ENCODE measurements at regions of chr22 and their contacts with region 1.

Region 1: GRCh38 chr22:33302049-33302545 is 243.9 kb upstream of the SYN3 start:
- DNase-seq: peak; percentile 85
- ATAC-seq: peak; percentile 87 to 91

Region 2: DNA sequence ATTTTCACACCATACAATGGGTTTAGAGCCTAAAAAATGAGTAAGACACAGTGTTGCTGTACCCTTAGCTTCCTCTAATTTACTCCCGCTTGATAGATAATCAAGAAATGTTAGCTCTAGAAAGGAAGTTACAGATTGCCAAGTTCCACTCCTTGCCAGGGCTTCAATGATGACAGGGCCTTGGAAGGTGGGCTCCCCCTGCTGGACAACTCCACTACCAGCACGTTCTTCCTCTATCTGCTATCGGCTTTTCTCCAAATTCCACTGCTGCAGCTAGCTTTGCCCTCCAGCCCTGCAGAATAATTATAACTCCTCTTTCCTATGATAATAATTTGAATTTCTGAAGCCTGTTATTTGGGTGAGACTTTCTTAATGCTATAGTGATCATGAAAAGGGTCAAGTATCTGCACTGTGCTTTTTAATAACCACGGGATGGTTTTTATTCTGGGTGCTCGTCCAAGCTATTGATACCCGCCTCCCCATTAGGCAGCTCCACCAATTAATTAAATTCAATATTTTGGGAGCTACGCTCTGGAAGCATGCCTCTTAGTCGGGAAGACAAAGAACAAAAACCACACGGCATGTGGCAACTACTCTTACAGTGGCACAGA is 252.9 kb before region 1 on chr22:
- intact Hi-C with region 1: no loop called
- DNase-seq: peak; percentile 81
- ATAC-seq: peak; percentile 82 to 92

Region 3: DNA sequence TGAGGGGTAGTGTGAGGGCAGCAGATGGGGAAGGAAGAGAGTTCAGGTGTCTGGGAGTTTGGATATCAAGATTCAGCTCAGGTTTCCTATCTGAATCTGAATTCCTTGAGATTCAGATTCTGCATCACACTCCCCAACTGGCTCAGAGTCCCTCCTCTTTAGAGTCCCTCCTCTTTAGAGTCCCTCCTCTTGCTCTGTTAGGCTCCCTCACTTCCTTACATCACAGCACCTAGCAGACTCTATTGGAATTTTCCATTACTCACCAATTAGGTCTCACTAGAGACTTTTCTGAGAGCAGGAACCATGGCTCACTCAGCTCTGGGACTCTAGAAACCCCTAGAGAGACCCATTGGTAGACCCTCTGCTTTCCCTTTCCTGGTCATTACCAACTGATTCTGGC is 59.5 kb after region 1 on chr22:
- intact Hi-C with region 1: loop called in 1 of 2 experiments (anchors 10 kb)
- DNase-seq: no peak
- ATAC-seq: peak in 1 of 2 donors; percentile 44

Region 4: GRCh38 chr22:33380789-33381530 is 78.9 kb after region 1 on chr22:
- intact Hi-C with region 1: no loop called
- DNase-seq: no peak
- ATAC-seq: peak in 1 of 2 donors; percentile 87

Region 5: GRCh38 chr22:33519071-33519973 is 217.2 kb after region 1 on chr22:
- intact Hi-C with region 1: loop called in 1 of 2 experiments (anchors 5 kb)
- DNase-seq: peak; percentile 34
- ATAC-seq: peak; percentile 66 to 78

Region 6: DNA sequence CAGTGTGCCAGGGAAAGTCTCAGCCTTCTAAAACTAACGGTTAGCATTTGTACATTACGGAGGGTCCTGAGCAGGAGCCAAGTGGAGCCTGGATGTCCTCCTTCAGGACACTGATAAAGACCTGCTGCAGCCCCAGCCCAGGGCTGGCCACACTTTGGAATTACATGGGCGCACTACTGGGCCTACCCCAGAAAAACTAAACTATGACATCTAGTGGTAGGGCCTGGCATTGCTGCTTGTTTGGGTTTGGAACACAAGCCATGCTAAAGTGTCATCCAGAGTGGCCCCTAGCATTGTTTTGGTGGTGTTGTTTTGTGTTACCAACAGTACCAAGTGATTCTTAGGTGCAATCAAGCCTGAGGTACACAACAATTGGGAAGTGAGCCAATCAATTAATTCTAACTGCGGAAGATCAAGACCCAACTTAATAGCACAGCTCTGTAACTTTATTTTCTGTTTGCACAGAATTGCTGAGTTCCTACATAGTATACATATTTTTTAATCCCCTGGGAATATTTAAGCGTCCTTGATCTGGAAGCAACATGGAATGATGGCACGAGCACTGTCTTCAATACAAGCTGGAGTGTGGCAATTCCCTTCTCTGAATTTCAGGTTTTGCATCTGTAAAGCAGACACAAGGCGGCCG is 277.5 kb after region 1 on chr22:
- intact Hi-C with region 1: loop called (anchors 5 to 10 kb)
- DNase-seq: peak; percentile 47
- ATAC-seq: peak; percentile 87 to 90

Region 7: DNA sequence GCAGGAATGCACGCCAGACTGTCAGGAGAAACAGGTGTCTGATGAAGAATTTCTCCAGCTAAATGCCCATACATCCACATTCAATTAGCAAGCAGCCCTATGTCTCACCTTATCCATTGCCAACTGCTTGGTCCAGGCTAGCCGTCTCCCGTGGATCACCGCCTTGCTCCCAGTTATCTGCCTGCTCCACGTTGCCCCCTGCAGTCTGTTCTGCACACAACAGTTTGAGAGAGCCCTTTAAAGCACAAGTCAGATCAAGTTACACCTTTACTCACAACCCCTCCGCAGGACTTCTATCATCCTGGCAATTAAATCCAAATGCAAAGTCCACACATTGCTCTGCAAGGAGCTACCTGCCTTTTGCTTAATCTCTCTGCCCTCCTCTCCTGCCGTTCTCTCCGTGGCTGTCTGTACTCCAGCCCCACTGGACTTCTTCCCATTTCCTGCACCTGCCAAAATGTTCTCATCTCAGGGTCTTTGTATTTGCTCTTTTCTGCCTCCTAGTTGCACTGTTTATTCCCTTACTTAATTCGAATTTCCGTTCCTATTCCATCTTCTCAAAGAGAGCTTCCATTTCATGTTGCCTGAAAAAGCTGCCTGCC is 803.5 kb after region 1 on chr22:
- intact Hi-C with region 1: loop called (anchors 2 to 10 kb)
- DNase-seq: peak; percentile 69
- ATAC-seq: peak; percentile 57 to 91

Region 8: DNA sequence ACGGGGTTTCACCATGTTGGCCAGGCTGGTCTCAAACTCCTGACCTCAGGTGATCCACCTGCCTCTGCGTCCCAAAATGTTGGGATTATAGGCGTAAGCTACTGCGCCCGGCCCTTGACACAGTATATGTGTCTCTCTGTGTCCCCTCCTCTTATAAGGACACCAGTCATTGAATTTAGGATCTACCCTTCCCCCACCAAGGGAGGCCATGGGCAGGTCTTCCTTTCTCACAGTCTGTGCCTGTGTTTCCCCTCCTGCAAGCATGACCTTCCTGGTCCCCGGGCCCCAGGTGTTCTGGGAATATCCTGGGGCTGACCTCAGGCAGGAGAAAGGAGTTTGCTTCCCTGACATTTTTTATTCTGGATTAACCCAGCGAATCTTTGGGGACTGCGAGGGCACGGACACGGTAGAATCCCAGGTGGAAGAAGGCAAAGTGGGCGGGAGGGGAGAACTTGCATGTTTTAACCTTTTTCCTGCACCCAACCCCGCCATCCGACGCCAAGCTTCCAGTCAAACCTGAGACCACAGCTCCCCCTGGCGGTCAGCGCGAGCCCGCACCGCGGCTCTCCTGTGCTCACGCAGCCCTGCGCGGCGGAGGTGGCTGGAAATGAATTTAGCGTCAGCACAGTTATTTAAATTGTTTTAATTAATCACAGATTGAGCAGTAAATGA is 1721.7 kb after region 1 on chr22:
- intact Hi-C with region 1: loop called in 1 of 2 experiments (anchors 10 kb)
- DNase-seq: peak; percentile 68
- ATAC-seq: peak; percentile 57 to 70

Measured in left cardiac atrium (tissue), 4 donors.